MCF 10A (cell line): ENCODE measurements at regions of chr4 and their contacts with region 1.

Region 1: DNA sequence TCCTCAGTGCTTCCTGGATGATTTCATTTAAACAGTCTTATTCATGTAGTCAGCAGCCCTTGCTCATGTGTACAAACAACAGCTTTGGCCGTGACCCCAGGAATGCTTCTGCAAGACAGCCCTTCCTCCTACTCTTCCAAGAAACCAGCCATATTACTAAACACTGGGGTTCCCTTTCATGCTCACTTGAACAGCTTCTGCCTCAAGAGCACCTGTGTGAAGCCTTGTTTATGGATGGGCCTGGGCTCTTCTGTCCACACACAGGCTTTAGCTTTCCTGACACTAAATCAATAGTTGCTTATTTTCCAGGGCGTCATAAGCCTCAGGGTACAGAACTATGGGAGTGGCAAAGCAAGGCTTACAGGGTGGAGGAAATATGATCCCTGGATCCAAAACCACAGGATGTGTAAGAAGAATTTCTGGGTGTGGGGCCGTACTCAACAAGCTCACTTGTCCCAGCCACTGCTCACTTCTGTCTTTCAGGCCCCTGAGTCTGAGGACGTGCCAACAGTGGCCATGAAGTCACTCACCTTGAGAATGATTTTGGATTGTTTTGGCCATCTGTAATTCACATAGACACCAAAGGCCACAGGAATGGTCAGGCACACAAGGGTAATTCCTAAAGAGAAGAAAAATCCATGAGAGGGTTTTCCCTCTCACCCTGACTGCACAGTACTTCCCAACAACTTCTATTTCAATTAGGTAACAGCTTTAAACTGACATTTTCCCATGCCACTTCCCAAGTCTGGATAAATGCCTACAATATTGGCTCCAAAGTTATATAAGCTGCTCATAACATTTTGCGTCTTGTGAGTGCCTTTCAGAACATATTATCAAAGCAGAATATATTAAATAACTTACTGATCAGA is 17.7 kb downstream of the SLC10A6 start:
- DNase-seq: peak; percentile 97
- H3K4me3 Mint-ChIP-seq: peak overlapping the region; percentile 45
- H3K27ac Mint-ChIP-seq: peak overlapping the region; percentile 98
- H3K4me1 Mint-ChIP-seq: peaks cover 18% of the 10 kb centered on the region
- H3K27me3 Mint-ChIP-seq: no peaks in the 10 kb centered on the region
- CTCF ChIP-seq: no peak

Region 2: DNA sequence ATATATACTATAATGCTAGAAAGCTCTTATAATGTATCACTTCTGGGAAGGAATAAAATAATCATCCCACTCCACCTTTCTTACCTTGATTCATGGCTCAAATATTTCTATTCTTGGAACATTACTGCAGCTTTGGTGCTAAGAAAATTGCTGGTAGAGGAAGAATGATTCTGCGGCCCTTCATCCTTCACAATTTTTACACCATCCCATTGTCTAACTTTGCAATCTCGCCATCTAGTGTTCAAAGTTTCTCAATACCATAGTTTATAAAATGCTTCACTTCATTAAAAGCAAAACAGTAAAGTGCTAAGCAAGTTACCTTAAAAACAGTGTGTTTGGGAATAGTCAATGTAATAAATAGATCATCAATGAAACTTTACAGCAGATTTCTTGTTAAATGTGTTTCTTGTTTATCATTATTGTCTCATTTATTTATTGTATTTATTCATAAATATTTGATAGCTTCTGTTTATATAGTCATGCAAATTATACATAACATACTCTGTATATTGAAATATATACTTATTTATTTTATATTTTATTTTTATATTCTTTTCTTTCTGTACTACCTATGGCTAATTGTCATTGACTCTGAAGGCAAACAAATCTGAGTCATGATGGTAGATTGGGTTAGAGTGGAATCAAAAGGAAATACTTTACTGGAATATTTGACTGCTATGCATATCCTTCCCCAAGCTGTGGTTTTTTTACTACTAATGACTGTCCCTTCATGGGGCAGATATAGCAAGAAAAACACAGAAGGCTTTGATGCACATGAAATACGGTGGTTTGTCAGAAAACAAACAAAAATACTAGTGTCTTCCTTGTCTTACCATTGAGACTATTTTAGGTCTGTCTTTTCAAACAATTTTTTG is 862.3 kb before region 1 on chr4:
- CTCF ChIA-PET with region 1: no interaction called
- POLR2A ChIA-PET with region 1: no interaction called
- intact Hi-C with region 1: no loop called
- DNase-seq: peak; percentile 73
- H3K4me3 Mint-ChIP-seq: no peak overlapping the region
- H3K27ac Mint-ChIP-seq: no peak overlapping the region
- H3K4me1 Mint-ChIP-seq: peaks cover 5% of the 10 kb centered on the region
- H3K27me3 Mint-ChIP-seq: no peaks in the 10 kb centered on the region
- CTCF ChIP-seq: peak; percentile 46

Region 3: GRCh38 chr4:86816501-86817273 is 14.8 kb before region 1 on chr4:
- CTCF ChIA-PET with region 1: interaction called, 9 read pairs
- POLR2A ChIA-PET with region 1: interaction called, 11 read pairs
- intact Hi-C with region 1: no loop called
- DNase-seq: no peak
- H3K4me3 Mint-ChIP-seq: no peak overlapping the region
- H3K27ac Mint-ChIP-seq: no peak overlapping the region
- H3K4me1 Mint-ChIP-seq: no peaks in the 10 kb centered on the region
- H3K27me3 Mint-ChIP-seq: no peaks in the 10 kb centered on the region
- CTCF ChIP-seq: no peak

Region 4: GRCh38 chr4:86846921-86847320 is 15.4 kb after region 1 on chr4:
- CTCF ChIA-PET with region 1: interaction called, 8 read pairs
- POLR2A ChIA-PET with region 1: interaction called, 13 read pairs
- intact Hi-C with region 1: no loop called
- DNase-seq: no peak
- H3K4me3 Mint-ChIP-seq: no peak overlapping the region
- H3K27ac Mint-ChIP-seq: no peak overlapping the region
- H3K4me1 Mint-ChIP-seq: peaks cover 30% of the 10 kb centered on the region
- H3K27me3 Mint-ChIP-seq: no peaks in the 10 kb centered on the region
- CTCF ChIP-seq: no peak